H1 (cell line): ENCODE measurements at regions of chr20 and their contacts with region 1.

Region 1: DNA sequence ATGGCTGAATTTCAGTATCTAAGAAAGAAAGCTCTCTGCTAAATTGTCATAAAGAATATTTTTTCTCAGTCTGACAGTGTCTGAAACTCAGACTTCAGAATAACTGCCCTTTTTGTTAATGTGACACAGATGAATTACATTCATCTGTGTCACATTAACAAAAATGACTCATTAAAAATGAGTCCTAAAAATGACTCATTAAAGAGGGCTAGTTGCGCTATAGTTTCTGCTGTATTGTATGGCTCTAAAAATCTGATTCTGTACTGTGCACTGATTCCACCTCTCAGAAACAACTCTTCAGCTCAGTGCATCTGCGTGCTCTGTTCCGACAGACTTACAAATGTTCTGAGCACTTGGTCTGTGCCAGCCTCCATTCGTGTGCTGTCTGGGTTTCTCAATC is 15.0 kb downstream of the RNF114 start:
- DNase-seq: no peak
- H3K4me3 ChIP-seq: no peak overlapping the region
- H3K27ac ChIP-seq: no peak overlapping the region
- H3K4me1 ChIP-seq: no peaks in the 10 kb centered on the region
- H3K27me3 ChIP-seq: no peaks in the 10 kb centered on the region
- CTCF ChIP-seq: no peak
- EP300 ChIP-seq: no peak
- POLR2A ChIP-seq: no peak
- RAD21 ChIP-seq: no peak

Region 2: DNA sequence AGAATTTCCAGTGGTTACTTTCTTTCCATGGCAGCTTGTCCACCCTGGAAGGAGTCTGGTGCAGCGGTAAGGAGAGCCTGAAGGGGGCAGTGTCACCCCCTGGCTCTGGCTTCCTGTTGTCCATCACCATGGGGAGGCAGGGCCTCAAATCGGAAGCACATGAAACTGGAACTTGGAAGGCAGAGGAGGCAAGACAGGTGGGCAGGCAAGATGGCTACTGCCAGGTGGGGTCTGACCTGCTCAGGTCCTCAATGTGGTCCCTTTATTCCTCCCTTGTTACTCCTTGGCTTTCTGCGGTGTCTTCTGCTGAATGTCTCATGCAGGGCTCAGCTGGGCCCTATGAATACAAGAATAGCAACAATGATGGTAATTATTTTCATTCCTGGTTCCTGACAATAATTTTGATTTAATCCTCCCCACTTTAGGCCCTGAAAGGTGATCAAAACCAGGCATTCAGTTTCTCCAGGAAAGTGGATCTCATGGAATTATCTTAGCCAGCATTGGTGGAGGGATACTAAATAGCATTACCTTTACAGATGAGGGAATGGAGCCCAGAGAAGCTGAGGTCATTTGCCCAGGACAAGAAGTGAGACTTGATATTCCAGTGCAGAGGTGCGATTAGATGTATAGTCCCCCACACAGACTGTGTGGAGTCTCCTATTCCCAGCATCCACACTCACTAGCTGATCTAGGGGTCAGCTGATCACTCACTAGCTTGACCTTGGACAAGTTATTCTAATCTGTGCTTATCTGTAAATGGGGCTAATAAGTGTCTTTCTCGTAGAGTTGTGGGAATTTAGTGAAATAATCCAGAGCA is 14.0 kb after region 1 on chr20:
- CTCF ChIA-PET with region 1: interaction called, 19 read pairs
- POLR2A ChIA-PET with region 1: interaction called, 5 read pairs
- DNase-seq: peak in 1 of 2 experiments; percentile 84
- H3K4me3 ChIP-seq: no peak overlapping the region
- H3K27ac ChIP-seq: no peak overlapping the region
- H3K4me1 ChIP-seq: peaks cover 0 to 2% (median under 1%) of the 10 kb centered on the region in 4 experiments; a peak in 2 of 7 replicates
- H3K27me3 ChIP-seq: no peaks in the 10 kb centered on the region
- CTCF ChIP-seq: peak; percentile 74 to 92 (median 88)
- EP300 ChIP-seq: no peak
- POLR2A ChIP-seq: no peak
- RAD21 ChIP-seq: peak; percentile 48 to 66

Region 3: DNA sequence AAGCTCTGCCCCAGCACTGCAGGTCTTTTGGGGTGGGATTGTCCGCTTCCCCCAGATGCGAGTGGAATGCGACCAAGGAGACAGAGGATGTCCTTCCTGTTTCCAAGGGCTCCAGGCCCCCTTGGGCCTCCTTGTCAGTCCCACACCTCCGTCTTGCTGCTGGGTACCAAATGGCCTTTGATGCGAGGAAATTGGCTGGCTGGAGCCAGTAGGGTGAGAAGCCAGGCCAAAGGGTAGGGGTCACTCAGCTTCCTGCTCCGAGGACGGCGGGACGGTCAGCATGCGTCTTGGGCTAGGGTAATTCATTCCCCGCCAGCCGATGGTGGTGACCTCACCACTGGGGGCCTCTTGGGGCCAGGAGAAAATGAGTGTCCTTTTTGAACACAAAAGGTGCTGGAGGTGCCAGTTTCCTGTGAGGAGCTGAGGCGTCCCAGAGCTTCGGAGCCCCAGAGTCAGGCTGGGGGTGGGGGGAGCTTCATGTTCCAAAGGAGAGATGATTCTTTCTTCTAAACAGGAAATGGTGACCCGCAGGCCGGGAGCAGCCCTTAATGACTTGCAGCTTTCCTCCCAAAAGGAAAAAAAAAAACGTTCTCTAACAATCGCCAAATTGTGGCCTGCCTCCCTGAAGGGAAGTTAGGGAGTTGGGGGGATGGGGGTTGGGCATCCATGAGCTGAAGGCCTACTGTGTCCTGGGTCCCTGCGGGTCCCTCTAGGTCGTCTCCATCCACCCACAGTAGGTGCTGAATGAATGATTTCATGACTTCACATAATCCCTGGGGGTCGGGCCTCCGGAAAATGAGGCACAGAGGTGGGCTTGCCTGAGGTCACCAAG is 38.3 kb after region 1 on chr20:
- CTCF ChIA-PET with region 1: no interaction called
- POLR2A ChIA-PET with region 1: no interaction called
- DNase-seq: peak in 1 of 2 experiments; percentile 59
- H3K4me3 ChIP-seq: no peak overlapping the region
- H3K27ac ChIP-seq: no peak overlapping the region; the same call in 1 of the 2 replicates
- H3K4me1 ChIP-seq: peaks cover 24 to 49% (median 42%) of the 10 kb centered on the region in 4 experiments
- H3K27me3 ChIP-seq: no peaks in the 10 kb centered on the region
- CTCF ChIP-seq: no peak
- EP300 ChIP-seq: no peak
- POLR2A ChIP-seq: no peak
- RAD21 ChIP-seq: no peak

Region 4: GRCh38 chr20:50027611-50028105 is 76.5 kb after region 1 on chr20:
- CTCF ChIA-PET with region 1: no interaction called
- POLR2A ChIA-PET with region 1: no interaction called
- DNase-seq: no peak
- H3K4me3 ChIP-seq: no peak overlapping the region
- H3K27ac ChIP-seq: no peak overlapping the region
- H3K4me1 ChIP-seq: peaks cover 0 to 3% (median 0%) of the 10 kb centered on the region in 4 experiments; a peak in 2 of 7 replicates
- H3K27me3 ChIP-seq: no peaks in the 10 kb centered on the region
- CTCF ChIP-seq: no peak
- EP300 ChIP-seq: no peak
- POLR2A ChIP-seq: no peak
- RAD21 ChIP-seq: no peak